ENCODE measurements at regions of chr4 and their contacts with region 1.

Region 1: GRCh38 chr4:154626793-154627484 is 14.5 kb upstream of the FGG start:
- DNase-seq: peak; percentile 78 to 88 (median 83)
- H3K4me3 ChIP-seq: peak overlapping the region in 2 of 3 donors; percentile 40 to 57
- H3K27ac ChIP-seq: no peak overlapping the region
- H3K4me1 ChIP-seq: no peaks in the 10 kb centered on the region
- H3K27me3 ChIP-seq: no peaks in the 10 kb centered on the region
- CTCF ChIP-seq: peak; percentile 31

Region 2: GRCh38 chr4:154551872-154552686 is 74.9 kb before region 1 on chr4:
- intact Hi-C with region 1: loop called (anchors 10 kb)
- DNase-seq: peak; percentile 78 to 90 (median 81)
- H3K4me3 ChIP-seq: no peak overlapping the region
- H3K27ac ChIP-seq: no peak overlapping the region
- H3K4me1 ChIP-seq: peaks cover 3 to 10% (median 5%) of the 10 kb centered on the region in 3 donors
- H3K27me3 ChIP-seq: no peaks in the 10 kb centered on the region
- CTCF ChIP-seq: peak; percentile 75

Region 3: GRCh38 chr4:154757713-154758112 is 130.8 kb after region 1 on chr4:
- intact Hi-C with region 1: no loop called
- DNase-seq: no peak
- H3K4me3 ChIP-seq: no peak overlapping the region
- H3K27ac ChIP-seq: no peak overlapping the region
- H3K4me1 ChIP-seq: no peaks in the 10 kb centered on the region
- H3K27me3 ChIP-seq: no peaks in the 10 kb centered on the region
- CTCF ChIP-seq: no peak

Measured in kidney (tissue), 22 donors.